Panc1 (cell line): ENCODE measurements at regions of chr14 and their contacts with region 1.

Region 1: GRCh38 chr14:68011406-68012028 is 191.9 kb downstream of the RAD51B start:
- DNase-seq: no peak
- ATAC-seq: no peak
- H3K4me3 ChIP-seq: no peak overlapping the region
- H3K27ac ChIP-seq: peak overlapping the region; percentile 68
- H3K4me1 ChIP-seq: peaks cover 4% of the 10 kb centered on the region
- H3K27me3 ChIP-seq: no peaks in the 10 kb centered on the region
- CTCF ChIP-seq: no peak

Region 2: DNA sequence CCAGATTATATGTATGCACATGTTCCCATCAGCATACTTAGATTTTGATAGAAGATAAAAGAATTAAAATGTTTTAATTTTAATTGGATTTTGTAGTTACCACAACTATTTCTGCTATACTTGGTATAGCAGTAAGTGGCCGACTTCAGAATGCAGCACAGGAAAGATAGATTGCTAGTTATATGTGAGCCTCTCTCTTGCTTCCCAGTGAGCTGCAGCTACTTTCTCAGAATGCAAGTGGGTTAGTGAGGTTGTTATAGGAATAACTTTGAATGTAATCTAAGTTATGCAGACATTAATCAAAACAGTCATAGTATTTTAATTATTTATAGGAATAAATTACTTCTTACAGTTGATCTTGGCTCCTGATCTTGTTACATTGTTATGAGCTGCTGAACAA is 48.7 kb after region 1 on chr14:
- CTCF ChIA-PET with region 1: interaction called, 10 read pairs
- POLR2A ChIA-PET with region 1: no interaction called
- in situ Hi-C with region 1: no loop called
- intact Hi-C with region 1: no loop called
- DNase-seq: no peak
- ATAC-seq: no peak
- H3K4me3 ChIP-seq: no peak overlapping the region
- H3K27ac ChIP-seq: peak overlapping the region; percentile 4; the same call in 1 of the 2 replicates
- H3K4me1 ChIP-seq: no peaks in the 10 kb centered on the region
- H3K27me3 ChIP-seq: no peaks in the 10 kb centered on the region
- CTCF ChIP-seq: no peak